PC-9 (cell line): ENCODE measurements at regions of chr3 and their contacts with region 1.

Region 1: GRCh38 chr3:11145888-11146287 is 8.4 kb upstream of the HRH1 start:
- DNase-seq: peak; percentile 33 to 83
- H3K4me3 ChIP-seq: no peak overlapping the region
- H3K27ac ChIP-seq: peak overlapping the region; percentile 63
- H3K4me1 ChIP-seq: peaks cover 41% of the 10 kb centered on the region
- H3K27me3 ChIP-seq: no peaks in the 10 kb centered on the region
- CTCF ChIP-seq: no peak

Region 2: DNA sequence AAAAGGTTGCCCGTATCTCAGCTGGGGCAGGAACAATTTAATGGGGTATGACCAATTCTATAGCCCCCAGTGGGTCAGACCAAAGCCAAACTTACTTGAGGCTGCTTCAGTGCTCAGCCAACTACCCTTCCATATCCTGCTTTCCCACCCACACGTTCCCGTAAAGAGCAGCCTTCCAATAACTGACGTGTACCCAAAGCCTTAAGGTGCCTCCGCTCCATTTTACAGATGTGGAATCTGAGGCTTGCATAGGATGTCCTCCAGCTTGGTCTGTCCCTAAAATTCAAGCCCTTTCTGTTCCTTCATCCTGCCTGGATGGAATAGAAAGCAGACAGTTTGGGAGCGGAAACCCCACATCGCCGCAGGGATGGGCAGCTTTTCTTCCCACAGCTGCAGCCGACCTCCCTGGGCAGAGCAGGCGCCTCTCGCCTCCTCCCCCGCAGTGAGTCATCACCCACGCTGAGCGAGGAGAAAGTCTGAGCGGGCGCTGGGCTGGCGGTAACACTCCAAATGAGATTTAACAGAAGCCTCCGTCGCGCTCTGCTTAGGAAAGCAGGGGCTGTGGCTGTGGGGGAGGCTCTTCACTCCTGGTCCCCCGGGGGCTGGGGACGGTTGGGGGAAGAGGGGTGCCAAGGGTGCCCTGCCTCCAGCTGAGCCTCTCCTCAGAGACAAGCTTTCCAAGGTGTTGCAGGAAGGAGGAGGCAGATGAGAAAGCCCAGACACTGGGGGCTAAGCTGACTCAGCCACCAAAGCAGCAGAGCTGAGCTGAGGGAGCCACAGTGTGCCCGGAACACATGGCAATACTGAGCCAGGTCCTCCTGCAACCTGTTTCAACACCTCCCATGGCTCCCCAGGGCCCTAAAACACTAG is 49.4 kb before region 1 on chr3:
- CTCF ChIA-PET with region 1: no interaction called
- POLR2A ChIA-PET with region 1: no interaction called
- intact Hi-C with region 1: loop called (anchors 2 kb)
- DNase-seq: peak; percentile 55 to 75
- H3K4me3 ChIP-seq: peak overlapping the region; percentile 53
- H3K27ac ChIP-seq: peak overlapping the region; percentile 54; the same call in 1 of the 2 replicates
- H3K4me1 ChIP-seq: peaks cover 13% of the 10 kb centered on the region
- H3K27me3 ChIP-seq: no peaks in the 10 kb centered on the region
- CTCF ChIP-seq: no peak

Region 3: DNA sequence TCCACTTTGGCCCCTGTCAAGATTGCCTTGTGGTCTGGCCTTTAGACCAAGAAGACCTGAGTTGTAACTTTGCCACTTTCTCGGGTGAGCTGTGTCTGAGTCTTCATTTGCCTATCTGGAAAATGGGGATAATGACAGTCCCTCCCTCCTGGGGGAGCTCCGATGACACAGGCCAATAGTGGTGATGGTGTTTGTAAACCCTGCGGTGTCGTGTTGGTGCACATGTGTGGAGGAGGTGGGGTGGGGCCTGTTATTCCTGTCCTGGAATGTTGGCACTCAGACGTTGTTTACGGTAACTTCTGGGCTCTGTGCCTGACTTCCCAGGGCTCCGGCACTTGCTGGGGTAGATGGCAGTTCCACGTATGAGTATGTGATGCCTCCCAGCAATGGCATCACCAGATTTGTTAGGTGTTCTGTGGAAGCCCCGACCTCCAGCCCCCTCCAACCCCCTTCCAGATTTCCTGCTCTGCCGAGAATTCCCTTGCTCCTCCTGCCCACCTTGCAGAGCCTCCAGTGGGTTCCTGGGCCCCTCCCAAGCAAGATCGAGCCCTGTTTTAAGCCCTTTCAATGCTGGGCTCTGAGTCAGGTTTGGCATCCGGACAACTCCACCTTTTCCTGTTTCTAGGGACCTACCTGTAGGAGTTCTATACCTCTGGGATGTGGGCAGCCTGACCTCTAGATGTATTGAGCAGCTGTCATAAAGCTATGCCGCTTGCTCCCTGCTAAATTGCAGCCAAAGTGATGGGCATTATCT is 39.9 kb after region 1 on chr3:
- CTCF ChIA-PET with region 1: interaction called, 4 read pairs
- POLR2A ChIA-PET with region 1: no interaction called
- intact Hi-C with region 1: loop called (anchors 2 kb)
- DNase-seq: peak; percentile 84 to 90
- H3K4me3 ChIP-seq: peak overlapping the region; percentile 12; the same call in 1 of the 2 replicates
- H3K27ac ChIP-seq: peak overlapping the region; percentile 49
- H3K4me1 ChIP-seq: peaks cover 45% of the 10 kb centered on the region
- H3K27me3 ChIP-seq: no peaks in the 10 kb centered on the region
- CTCF ChIP-seq: no peak; the same call in 1 of the 2 replicates